Mucosa of descending colon (tissue), 3 donors: ENCODE measurements at regions of chr1 and their contacts with region 1.

Region 1: DNA sequence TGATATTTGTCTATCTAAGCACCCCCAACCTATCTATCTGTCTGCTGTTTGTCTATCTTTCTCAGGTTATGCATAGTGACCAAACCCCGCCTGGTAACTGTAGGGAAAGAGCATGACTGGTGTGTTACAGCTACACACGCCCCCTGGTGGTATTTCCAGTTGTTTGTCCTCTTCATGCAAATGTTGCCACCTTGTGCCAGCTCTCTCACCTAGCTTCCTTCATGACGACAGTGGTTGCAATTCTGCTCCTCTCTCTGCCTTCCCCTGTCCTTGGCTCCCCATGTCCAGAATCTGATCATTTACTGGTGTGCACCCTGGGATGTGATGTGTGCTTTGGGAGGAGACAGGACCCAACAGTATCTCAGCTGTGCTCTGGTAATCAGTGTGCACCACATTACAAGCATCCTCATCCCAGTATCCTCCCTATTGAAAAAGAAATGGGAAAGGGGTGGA is 8.1 kb upstream of the INKA2 start:
- DNase-seq: peak in 1 of 3 donors; percentile 90
- ATAC-seq: peak; percentile 95
- H3K4me3 ChIP-seq: no peak overlapping the region
- H3K4me1 ChIP-seq: no peaks in the 10 kb centered on the region
- CTCF ChIP-seq: peak; percentile 39

Region 2: DNA sequence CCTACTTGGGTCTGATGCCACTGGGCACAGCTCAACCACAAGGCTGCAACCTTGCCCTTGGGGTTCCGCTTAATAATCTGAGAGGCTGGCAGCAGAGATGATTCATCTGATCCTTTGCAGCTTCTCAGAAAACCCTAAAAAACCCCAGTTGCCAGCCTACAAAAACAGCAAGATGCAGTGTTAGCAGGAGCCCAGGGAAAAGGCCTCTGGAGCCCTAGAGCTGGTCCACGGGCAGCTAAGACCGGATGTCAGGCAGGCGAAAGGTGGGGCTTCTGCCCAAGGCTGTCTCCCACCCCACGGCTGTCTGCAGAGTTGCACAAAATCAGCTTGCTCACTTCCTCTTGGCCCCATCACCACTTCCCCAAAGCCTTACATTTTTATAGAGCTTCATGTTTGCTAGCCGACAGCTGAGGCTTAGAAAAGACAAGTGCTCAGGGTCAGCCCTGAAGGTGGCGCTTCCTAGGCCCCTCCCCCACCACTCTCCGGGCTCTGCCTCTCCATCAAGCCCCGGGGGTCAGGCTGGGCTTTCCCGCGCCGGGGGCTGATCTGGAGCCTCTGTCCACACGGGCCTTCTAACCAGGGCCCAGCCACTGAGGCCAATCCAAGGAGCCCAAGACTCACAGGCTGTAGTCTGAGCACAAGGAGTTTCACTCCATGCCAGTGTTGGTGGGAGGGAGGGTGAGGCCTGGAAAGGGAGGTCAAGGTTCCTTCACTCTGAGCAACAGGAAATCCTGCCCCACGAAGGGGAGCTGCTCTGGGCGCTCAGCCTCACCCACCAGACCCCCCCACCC is 239.7 kb before region 1 on chr1:
- intact Hi-C with region 1: loop called in 1 of 2 experiments (anchors 10 kb)
- DNase-seq: peak; percentile 87 to 89 (median 87)
- ATAC-seq: peak; percentile 85
- H3K4me3 ChIP-seq: no peak overlapping the region
- H3K4me1 ChIP-seq: peaks cover 25% of the 10 kb centered on the region
- CTCF ChIP-seq: no peak